Mammary epithelial cell (primary cell): ENCODE measurements at regions of chr20 and their contacts with region 1.

Region 1: DNA sequence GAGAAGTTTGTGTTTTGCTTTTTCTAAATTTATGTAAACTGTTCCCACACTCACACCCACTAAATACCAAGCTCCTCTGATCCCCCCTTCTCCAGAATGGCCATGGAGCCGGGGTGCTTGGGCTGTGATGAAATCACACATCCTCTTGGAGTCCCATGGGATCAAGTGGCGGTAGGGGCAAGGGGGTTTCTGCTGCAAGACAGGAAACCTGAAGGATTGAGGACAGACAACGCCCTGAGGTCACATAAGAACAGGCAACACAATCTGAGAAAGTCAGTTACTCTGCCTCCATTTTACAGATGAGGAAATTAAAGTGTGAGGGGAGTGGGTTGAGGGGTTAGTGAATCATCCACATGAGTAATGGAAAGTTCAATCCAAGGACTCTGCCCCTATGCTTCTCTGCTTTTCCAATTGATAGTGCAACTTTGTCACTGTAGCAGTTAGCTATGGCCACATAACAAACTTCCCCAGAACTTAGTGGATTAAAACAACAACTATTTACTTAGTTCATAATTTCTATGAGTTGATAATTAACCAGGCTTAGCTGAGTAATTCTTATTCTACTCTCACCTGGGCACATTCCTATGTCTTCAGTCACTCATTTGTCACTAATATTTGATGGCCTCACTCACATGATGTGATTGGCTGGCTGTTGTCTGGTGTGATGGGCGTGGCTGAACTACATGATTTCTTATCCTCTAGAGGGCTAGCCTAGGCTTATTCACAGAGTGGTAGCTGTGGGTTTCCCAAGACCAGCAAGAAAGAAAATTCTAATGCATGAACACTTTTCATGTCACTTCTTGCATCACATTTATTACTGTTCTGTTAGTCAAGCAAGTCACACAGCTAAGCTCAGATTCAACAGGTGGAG is 311.1 kb upstream of the RNF24 start:
- DNase-seq: peak; percentile 82
- H3K4me3 ChIP-seq: no peak overlapping the region
- H3K27ac ChIP-seq: peak overlapping the region; percentile 13
- H3K4me1 ChIP-seq: peaks cover 10% of the 10 kb centered on the region
- H3K27me3 ChIP-seq: no peaks in the 10 kb centered on the region
- CTCF ChIP-seq: peak; percentile 13 to 15

Region 2: DNA sequence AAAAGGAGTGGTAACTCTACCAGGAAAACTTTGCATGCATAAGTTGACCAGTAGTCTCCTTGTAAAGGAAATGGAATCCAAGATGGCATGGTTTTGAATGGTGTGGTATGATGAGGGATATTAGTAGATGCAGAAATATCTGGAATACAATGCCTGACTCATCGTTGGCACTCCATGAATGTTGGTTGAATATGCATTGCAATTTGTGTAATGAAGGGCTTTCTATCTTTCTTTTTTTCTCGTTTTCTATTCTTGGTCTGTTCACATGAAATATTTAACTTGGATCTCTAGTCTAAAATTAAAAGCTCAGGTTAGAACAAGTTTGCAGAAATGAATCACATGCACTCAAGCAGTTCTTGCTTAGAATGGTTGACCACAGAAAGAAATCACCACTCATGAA is 118.0 kb after region 1 on chr20:
- CTCF ChIA-PET with region 1: no interaction called
- dilution Hi-C with region 1: no loop called
- in situ Hi-C with region 1: no loop called
- intact Hi-C with region 1: loop called (anchors 2 kb)
- DNase-seq: peak; percentile 92
- H3K4me3 ChIP-seq: no peak overlapping the region
- H3K27ac ChIP-seq: peak overlapping the region; percentile 66
- H3K4me1 ChIP-seq: peaks cover 37% of the 10 kb centered on the region
- H3K27me3 ChIP-seq: no peaks in the 10 kb centered on the region
- CTCF ChIP-seq: no peak

Region 3: DNA sequence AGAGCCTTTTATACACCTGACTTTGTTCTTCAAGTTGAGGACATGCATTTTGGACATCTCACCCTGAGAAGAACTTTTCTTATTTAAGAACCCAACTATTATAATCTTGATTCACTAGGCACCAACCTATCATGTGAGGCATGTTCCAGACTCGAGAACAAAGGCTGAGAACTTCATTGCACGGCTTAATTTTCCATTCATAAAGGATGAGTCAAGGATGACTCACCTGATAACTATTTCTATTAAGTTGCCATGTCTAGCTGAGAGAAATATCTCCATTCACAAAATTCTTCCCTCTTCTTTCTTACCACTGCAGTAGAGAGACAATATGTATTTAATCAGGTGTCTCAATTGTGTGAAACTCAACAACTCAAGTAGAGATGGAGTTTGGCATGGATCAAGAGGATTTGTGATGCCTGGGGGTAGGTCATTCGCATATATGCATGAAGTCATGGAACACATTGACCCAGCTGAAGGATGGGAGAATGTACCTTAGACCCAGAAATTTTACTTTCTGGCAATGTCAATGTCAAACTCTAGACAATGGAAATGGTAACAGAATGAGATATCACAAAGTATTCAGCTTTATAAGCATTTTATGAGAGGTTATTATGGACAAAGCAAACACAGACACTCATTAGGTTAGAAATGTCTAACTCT is 186.6 kb after region 1 on chr20:
- CTCF ChIA-PET with region 1: no interaction called
- dilution Hi-C with region 1: no loop called
- in situ Hi-C with region 1: no loop called
- intact Hi-C with region 1: loop called (anchors 2 kb)
- DNase-seq: peak; percentile 91
- H3K4me3 ChIP-seq: no peak overlapping the region
- H3K27ac ChIP-seq: peak overlapping the region; percentile 95
- H3K4me1 ChIP-seq: peaks cover 37% of the 10 kb centered on the region
- H3K27me3 ChIP-seq: no peaks in the 10 kb centered on the region
- CTCF ChIP-seq: no peak

Region 4: DNA sequence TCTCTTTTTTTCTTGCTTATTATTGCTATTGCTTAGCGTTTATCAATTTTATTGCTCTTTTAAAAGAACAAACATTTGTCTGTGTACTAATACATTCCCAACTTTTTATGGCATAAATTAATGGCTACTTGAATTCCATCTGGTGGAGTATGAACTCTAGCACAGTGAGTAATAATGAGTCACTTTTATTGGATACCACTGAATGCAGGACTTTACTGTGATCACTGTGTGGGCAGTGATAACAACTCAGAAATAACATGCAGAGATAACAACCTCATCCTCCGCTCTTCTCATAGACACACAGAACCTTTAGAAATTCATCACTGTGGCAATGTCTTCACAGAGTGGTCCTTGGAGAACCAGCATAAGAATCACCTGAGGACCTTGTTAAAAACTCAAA is 220.4 kb after region 1 on chr20:
- CTCF ChIA-PET with region 1: no interaction called
- dilution Hi-C with region 1: no loop called
- in situ Hi-C with region 1: no loop called
- intact Hi-C with region 1: loop called (anchors 10 kb)
- DNase-seq: peak; percentile 79
- H3K4me3 ChIP-seq: no peak overlapping the region
- H3K27ac ChIP-seq: peak overlapping the region; percentile 31
- H3K4me1 ChIP-seq: peaks cover 64% of the 10 kb centered on the region
- H3K27me3 ChIP-seq: no peaks in the 10 kb centered on the region
- CTCF ChIP-seq: no peak